ENCODE measurements at regions of chr17 and their contacts with region 1.

Region 1: DNA sequence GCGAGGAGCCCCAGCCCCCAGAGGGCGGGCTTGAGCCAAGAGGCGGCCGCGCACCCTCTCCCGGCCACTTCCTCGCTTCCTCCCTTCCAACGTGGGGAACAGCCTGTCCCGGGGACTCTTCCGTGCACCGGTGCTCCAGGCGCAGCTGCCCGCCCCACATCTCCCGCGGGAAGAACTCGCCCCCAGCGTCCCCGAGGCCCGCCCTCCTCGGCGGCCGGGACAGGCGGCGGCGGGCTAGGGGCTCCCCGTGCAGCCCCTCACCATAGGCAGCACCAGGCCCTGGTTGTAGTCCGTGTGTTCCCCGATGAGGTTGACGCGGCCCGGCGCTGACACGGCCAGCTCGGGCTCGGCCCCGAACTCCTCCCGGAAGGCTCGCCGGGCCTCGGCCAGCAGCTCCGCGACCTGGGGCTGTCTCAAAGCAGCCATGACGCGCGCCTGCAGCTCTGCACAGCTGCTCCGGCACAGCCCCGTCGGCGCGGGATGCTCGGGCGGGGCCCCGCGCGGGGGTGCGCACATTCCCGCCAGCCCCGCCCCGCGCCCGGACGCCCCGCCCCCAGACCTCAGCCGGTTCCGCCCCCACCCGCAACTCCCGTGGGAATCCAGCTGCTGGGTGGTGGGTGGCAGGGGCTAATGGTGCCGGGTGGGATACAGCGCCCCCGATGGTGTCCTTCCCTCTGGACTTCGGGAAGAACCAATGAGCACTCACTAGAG is at the start of gene GALK1:
- DNase-seq: peak; percentile 56 to 78 (median 67)
- ATAC-seq: peak; percentile 97
- H3K4me3 ChIP-seq: peak within 1 kb of the TSS; percentile 71
- H3K4me3 Mint-ChIP-seq: peak within 1 kb of the TSS; percentile 62 to 84 (median 75)
- H3K27ac ChIP-seq: peak within 1 kb of the TSS; percentile 67
- H3K27ac Mint-ChIP-seq: peak within 1 kb of the TSS; percentile 32 to 87 (median 70)
- H3K4me1 ChIP-seq: peaks cover 11% of the 10 kb centered on the region in 2 donors
- H3K4me1 Mint-ChIP-seq: peaks cover 0 to 21% (median 10%) of the 10 kb centered on the region in 7 donors
- H3K27me3 ChIP-seq: no peaks in the 10 kb centered on the region
- H3K27me3 Mint-ChIP-seq: no peaks in the 10 kb centered on the region
- total RNA-seq, gene GALK1: 9.9 to 42.9 (median 22.1) TPM

Region 2: DNA sequence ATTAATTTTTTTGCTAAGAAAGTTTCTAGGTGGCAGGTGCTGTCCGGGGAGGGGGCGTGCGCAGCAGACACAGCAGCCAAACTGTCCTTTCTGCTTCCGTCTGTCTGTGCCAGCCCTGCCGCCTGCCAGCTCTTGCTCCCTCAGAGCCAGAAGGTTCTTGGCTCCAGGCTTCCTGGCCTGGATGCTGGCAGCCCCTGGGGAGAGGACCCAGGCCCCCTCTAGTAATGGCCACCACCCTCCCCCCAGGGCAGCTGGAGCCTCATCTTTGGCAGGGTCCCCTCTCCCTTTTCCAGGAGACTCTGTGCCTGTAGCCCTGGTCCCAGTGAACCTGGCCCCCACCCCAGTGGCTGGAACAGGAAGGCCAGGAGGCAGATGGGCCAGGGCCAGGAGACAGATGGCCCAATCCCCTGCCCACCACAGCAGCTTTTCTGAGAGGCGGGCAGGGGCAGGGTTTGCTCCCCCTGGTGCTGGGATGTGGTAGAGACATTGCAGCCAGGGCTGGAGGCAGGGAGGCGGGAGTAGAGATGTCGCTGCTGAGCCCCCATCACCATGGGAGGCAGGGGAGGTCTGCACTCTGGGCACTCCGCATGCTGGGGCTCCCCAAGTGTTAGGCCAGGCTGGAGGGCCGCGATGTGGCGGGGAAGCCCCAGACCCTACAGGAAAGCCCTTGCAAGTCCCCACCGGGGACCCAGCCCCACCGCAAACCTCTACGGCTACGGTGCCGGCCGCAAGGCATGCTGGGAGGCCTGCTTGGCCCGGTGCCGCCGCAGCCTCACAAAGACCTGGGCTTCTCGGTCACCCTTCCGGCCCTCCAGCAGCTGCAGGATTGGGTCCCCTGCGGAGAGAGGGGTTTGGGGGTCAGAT is 62.6 kb after region 1 on chr17:
- CTCF ChIA-PET with region 1: interaction called, 8 read pairs
- POLR2A ChIA-PET with region 1: interaction called, 7 read pairs
- intact Hi-C with region 1: loop called (anchors 1 kb)
- DNase-seq: peak; percentile 41 to 66 (median 61)
- ATAC-seq: peak; percentile 76
- H3K4me3 ChIP-seq: peak overlapping the region; percentile 30
- H3K4me3 Mint-ChIP-seq: peak overlapping the region; percentile 37 to 74 (median 56)
- H3K27ac ChIP-seq: peak overlapping the region; percentile 67
- H3K27ac Mint-ChIP-seq: peak overlapping the region; percentile 6 to 91 (median 76)
- H3K4me1 ChIP-seq: peaks cover 8% of the 10 kb centered on the region in 2 donors
- H3K4me1 Mint-ChIP-seq: peaks cover 5 to 16% (median 11%) of the 10 kb centered on the region in 7 donors
- H3K27me3 ChIP-seq: no peaks in the 10 kb centered on the region
- H3K27me3 Mint-ChIP-seq: no peaks in the 10 kb centered on the region